ENCODE measurements at regions of chr11 and their contacts with region 1.

Region 1: GRCh38 chr11:93234602-93235207 is 36.9 kb upstream of the SLC36A4 start:
- DNase-seq: peak; percentile 48
- H3K4me3 Mint-ChIP-seq: no peak overlapping the region
- H3K27ac Mint-ChIP-seq: no peak overlapping the region
- H3K4me1 Mint-ChIP-seq: no peaks in the 10 kb centered on the region
- H3K27me3 Mint-ChIP-seq: peaks cover 26% of the 10 kb centered on the region

Region 2: GRCh38 chr11:93324500-93324899 is 89.8 kb after region 1 on chr11:
- intact Hi-C with region 1: no loop called
- DNase-seq: no peak
- H3K4me3 Mint-ChIP-seq: no peak overlapping the region
- H3K27ac Mint-ChIP-seq: no peak overlapping the region
- H3K4me1 Mint-ChIP-seq: no peaks in the 10 kb centered on the region
- H3K27me3 Mint-ChIP-seq: peaks cover 9% of the 10 kb centered on the region

Region 3: DNA sequence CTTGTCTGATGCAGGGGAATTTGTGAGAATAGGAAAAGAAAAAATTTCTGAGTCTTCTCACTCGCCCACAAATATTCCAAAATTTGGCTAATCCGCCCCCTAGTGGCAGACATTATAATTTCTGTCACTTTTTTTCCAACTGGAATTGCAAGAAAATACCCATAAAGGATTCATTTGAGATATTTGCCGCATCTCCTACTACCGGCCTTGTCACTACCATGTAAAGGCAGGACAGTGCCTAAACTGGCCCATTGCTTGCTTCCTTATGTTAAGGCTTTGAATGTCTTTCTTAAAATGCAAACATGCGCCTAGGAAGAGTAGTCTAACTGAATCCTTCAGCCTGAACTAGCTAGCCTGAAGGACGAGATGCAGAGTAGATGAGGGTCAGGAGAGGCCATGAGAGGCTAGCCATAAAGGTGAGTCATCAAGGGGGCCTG is 417.5 kb after region 1 on chr11:
- intact Hi-C with region 1: loop called (anchors 1 kb)
- DNase-seq: no peak
- H3K4me3 Mint-ChIP-seq: no peak overlapping the region
- H3K27ac Mint-ChIP-seq: peak overlapping the region; percentile 7
- H3K4me1 Mint-ChIP-seq: peaks cover 35% of the 10 kb centered on the region
- H3K27me3 Mint-ChIP-seq: peaks cover 9% of the 10 kb centered on the region